Heart right ventricle (tissue), 16 donors: ENCODE measurements at regions of chr2 and their contacts with region 1.

Region 1: GRCh38 chr2:6922201-6922685 is 5.0 kb downstream of the RNF144A start:
- DNase-seq: no peak
- ATAC-seq: no peak
- H3K4me3 ChIP-seq: no peak overlapping the region
- H3K27ac ChIP-seq: peak overlapping the region in 1 of 10 donors; percentile 59
- H3K4me1 ChIP-seq: peaks cover 7 to 91% (median 69%) of the 10 kb centered on the region in 9 donors
- H3K27me3 ChIP-seq: no peaks in the 10 kb centered on the region
- CTCF ChIP-seq: peak in 1 of 9 donors; percentile 15

Region 2: GRCh38 chr2:6957910-6958615 is 35.8 kb after region 1 on chr2:
- intact Hi-C with region 1: loop called in 3 of 10 experiments (anchors 5 kb)
- DNase-seq: peak in 1 of 2 donors; percentile 35
- ATAC-seq: peak in 6 of 8 donors; percentile 23 to 65 (median 38)
- H3K4me3 ChIP-seq: no peak overlapping the region
- H3K27ac ChIP-seq: peak overlapping the region in 2 of 10 donors; percentile 19 to 42
- H3K4me1 ChIP-seq: peaks cover 5 to 70% (median 49%) of the 10 kb centered on the region in 9 donors
- H3K27me3 ChIP-seq: no peaks in the 10 kb centered on the region
- CTCF ChIP-seq: no peak

Region 3: GRCh38 chr2:6977113-6977741 is 55.0 kb after region 1 on chr2:
- intact Hi-C with region 1: loop called in 4 of 10 experiments (anchors 5 to 10 kb)
- DNase-seq: peak; percentile 74 to 75
- ATAC-seq: peak; percentile 80 to 93 (median 86)
- H3K4me3 ChIP-seq: no peak overlapping the region
- H3K27ac ChIP-seq: peak overlapping the region in 5 of 10 donors; percentile 9 to 61 (median 19)
- H3K4me1 ChIP-seq: peaks cover 0 to 37% (median 22%) of the 10 kb centered on the region in 9 donors
- H3K27me3 ChIP-seq: no peaks in the 10 kb centered on the region
- CTCF ChIP-seq: no peak

Region 4: DNA sequence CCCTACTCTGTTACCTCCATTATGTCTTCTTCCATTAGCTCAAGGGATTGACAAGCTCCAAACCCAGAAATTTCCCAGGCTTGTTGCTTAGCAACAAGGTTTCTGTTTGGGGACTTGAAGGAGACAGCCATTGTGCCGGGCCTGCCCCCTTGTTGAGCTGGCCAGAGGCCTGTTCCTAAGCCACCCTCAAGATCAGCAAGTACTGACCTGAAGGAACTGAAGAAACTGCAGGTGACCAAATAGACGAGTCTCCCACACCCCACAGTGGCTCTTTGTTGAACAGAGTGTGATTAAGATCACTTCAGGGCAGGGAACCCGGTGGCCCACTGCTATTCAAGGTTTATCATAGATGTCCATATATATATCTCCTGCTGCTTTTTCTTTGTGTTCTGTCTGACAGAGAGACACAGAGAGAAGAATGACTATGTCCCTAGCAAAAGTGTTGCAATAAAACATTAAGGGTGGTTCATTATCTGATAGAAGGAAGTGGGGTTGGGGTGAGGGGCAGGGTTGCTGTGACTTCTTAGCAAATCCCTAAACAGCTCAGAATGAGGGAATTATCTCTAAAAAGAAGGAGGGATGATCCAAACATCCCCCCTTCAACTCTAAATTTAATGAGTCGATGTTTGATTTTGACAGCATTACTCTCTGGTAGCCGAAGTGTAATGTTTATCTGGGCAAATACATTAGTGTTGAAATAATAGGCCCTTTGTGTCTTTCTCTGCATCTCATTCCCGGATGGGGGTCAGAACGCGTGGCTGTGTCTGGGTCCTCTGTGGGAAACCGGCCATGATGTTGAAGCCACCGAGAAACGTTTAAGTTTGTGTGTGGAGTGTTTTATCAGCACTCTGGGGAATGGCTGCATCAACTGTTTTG is 64.3 kb after region 1 on chr2:
- intact Hi-C with region 1: loop called in 1 of 10 experiments (anchors 10 kb)
- DNase-seq: no peak
- ATAC-seq: peak in 7 of 8 donors; percentile 10 to 61 (median 37)
- H3K4me3 ChIP-seq: no peak overlapping the region
- H3K27ac ChIP-seq: peak overlapping the region in 9 of 10 donors; percentile 37 to 75 (median 59)
- H3K4me1 ChIP-seq: peaks cover 17 to 67% (median 43%) of the 10 kb centered on the region in 9 donors
- H3K27me3 ChIP-seq: no peaks in the 10 kb centered on the region
- CTCF ChIP-seq: no peak

Region 5: GRCh38 chr2:7007846-7008741 is 85.9 kb after region 1 on chr2:
- intact Hi-C with region 1: loop called in 6 of 10 experiments (anchors 1 to 5 kb)
- DNase-seq: peak; percentile 93 to 94
- ATAC-seq: peak; percentile 82 to 90 (median 84)
- H3K4me3 ChIP-seq: peak overlapping the region in 7 of 10 donors; percentile 1 to 26 (median 17)
- H3K27ac ChIP-seq: peak overlapping the region; percentile 67 to 89 (median 82)
- H3K4me1 ChIP-seq: peaks cover 29 to 89% (median 68%) of the 10 kb centered on the region in 9 donors
- H3K27me3 ChIP-seq: no peaks in the 10 kb centered on the region
- CTCF ChIP-seq: peak; percentile 15 to 65 (median 45)